Right ventricle myocardium inferior (tissue), 1 donor: ENCODE measurements at regions of chr1 and their contacts with region 1.

Region 1: GRCh38 chr1:163315773-163316374 is 5.9 kb upstream of the NUF2 start:
- DNase-seq: no peak
- ATAC-seq: no peak

Region 2: DNA sequence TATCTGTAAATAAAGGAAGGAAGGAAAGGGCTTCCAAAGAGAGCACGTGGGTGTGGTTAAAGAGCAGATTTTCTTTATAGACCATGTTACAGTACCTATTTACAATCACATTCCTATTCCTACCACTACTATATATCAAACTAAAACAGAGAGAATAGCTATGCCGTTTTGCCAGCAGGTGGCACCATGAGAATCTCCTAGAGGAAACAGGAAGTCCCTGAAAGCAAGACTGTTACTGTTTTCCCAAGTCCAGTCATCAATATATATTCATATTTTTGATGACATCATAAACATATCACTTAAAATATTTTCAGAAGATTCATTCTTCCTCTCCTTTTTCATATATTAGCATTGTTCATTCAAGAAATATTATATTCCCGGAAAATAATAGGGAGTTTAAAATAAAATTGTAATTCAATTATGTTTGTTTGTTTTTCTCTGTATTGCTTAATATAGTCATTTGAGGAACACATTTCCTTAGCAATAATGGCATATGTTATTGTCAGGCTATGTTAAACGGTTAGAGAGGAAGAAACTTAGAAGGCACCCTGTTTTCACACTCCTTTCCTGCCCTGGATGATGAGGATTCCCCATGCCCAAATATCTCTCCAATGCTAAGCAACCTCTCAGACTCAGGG is 461.5 kb before region 1 on chr1:
- intact Hi-C with region 1: loop called (anchors 2 kb)
- DNase-seq: no peak
- ATAC-seq: peak; percentile 56

Region 3: DNA sequence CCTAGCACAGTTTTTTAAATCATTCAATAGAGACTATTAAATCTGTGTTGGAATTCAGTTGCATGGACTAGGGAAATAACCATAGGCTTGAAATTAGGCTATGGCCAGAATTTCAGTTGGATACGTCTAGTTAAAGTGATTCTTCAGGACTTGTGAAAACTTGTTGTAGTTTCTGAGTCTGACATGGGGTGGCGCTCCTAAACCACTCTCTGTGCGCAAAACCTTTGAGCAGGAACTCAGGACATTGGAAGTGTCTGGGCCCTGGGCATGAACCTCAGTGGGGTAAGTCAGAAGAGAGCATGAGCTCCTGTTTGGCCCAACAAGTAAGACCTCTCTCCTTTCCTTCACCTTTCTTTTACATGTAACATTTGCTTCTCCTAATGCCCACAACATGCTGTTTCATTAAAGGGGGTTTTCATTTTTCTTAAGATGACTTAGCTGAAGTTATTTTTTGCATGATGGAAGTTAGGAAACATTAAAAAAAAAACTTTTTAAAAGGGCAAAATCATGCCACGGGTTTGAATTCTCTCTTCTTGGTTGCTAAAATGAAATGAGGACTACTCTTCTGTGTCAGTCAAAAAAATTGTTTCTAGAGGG is 437.8 kb before region 1 on chr1:
- intact Hi-C with region 1: loop called (anchors 5 kb)
- DNase-seq: no peak
- ATAC-seq: peak; percentile 59

Region 4: DNA sequence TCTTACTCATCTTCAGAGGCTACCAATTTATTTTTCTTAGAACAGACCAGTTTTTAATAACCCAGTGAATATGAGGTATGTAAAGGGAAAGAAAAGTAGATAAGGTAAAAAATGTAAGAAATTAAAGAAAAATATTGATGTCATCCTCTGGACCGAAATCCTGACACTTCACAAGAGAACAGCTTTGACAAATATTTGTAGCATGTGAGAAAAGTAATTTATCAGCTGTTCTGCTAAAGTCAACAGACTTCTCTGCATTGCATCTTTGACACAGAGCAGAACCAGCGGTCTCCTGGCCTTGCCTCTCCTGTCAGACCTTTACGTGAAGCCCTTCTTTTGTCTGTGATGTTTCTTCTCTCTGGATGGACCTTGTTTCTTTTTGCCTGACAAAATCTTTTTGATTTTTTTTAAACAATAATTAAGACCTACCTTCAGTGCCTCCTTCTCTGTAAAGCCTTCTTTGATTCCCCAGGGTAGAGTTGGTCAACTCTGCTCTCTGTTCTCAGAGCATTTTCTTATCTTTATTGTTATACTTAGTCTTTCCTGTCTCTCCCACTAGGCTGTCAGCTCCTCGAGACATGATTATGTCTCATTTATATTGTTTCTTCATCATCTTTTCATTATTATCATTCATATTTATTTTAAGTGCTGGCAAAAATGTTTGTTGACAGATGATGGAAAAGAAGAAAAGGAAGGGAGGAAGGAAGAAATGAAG is 211.3 kb before region 1 on chr1:
- intact Hi-C with region 1: no loop called
- DNase-seq: no peak
- ATAC-seq: no peak

Region 5: GRCh38 chr1:163205513-163205912 is 110.4 kb before region 1 on chr1:
- intact Hi-C with region 1: no loop called
- DNase-seq: no peak
- ATAC-seq: no peak